ENCODE measurements at regions of chr5 and their contacts with region 1.

Region 1: DNA sequence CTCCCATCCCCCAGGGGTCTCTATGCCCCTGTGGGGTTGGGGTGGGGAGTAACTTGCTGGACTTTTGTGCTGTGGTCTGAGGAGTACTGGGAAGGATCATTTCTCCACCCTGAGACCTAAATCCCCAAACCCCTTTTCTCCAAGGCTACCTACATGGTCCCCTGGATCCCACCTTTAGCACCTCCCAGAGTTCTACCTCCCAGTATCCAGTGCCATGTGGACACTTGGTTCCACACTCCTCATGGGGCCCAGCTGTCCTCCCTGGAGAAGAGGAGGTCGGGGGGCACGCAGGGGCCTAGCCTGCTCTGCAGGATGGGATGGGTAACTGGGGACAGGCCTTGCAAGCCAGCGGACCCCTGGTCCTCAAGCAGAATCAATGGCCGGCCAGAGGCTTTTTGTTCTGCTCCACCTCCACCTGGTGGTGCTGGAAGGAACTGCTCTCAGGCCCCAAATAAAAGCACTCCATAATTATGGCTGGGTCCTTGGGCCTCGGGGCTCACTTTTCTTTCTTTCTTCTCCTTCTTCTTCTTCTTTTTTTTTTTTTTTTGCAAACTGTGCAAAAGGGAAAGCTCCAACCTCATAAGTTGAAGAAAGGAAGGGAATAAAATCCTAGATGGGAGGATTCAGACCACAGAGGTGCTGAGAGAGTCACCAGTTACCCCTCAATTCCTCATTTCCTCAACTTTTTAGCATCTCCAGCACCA is 68.4 kb downstream of the PSD2 start:
- DNase-seq: peak; percentile 45
- ATAC-seq: peak; percentile 90
- H3K4me3 Mint-ChIP-seq: no peak overlapping the region
- H3K27ac Mint-ChIP-seq: no peak overlapping the region
- H3K4me1 Mint-ChIP-seq: peaks cover 5% of the 10 kb centered on the region
- H3K27me3 Mint-ChIP-seq: peaks cover 20% of the 10 kb centered on the region
- CTCF ChIP-seq: peak; percentile 64

Region 2: DNA sequence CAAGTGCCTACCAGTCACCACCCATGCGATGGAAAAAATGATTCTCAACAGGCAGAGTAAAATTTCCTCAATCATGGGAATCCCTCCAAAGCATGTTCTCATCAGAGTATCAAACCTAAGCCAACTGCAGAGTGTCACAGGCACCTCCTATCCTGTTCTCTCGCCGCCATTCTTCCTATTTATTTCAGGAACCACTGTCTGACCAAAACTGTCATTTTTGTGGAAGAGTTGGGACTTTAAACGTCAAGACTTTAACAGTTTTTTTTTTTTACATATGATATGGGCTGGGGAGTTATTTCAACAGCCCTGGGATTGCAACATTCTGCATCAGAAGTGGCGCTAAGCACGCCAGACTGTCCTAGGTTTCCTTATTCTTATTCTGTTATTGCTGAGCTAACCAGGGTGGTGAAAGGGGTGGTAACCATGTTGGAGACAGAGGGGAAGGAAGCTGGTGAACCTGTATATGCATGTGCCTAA is 409.4 kb after region 1 on chr5:
- CTCF ChIA-PET with region 1: no interaction called
- POLR2A ChIA-PET with region 1: interaction called, 12 read pairs
- intact Hi-C with region 1: no loop called
- DNase-seq: no peak
- ATAC-seq: no peak
- H3K4me3 Mint-ChIP-seq: no peak overlapping the region
- H3K27ac Mint-ChIP-seq: no peak overlapping the region
- H3K4me1 Mint-ChIP-seq: no peaks in the 10 kb centered on the region
- H3K27me3 Mint-ChIP-seq: no peaks in the 10 kb centered on the region
- CTCF ChIP-seq: no peak